AG04449 (cell line): ENCODE measurements at regions of chr3 and their contacts with region 1.

Region 1: GRCh38 chr3:55721716-55722484 is 234.8 kb upstream of the WNT5A start:
- DNase-seq: no peak
- H3K4me3 ChIP-seq: no peak overlapping the region
- CTCF ChIP-seq: peak; percentile 63

Region 2: DNA sequence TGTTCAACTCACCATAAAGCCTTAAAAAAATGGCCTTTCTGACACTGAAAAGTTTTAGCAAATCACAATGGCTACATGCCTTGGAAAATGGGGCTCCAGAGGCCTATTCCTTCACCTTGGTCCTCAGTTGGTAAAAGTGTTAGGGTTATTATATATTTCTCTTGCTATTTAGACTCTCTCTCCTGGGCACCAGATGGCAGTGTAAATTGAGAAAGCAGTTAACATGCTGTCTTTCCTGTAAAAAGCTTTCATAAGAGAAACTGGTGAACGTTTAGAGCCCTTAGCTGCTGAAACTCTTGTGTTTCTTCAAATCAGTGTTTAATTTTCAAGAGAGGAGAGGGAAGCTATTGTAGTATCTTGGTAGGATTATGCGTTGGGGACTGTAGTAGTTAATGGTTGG is 883.9 kb before region 1 on chr3:
- CTCF ChIA-PET with region 1: interaction called, 11 read pairs
- POLR2A ChIA-PET with region 1: no interaction called
- DNase-seq: no peak
- H3K4me3 ChIP-seq: no peak overlapping the region
- CTCF ChIP-seq: peak; percentile 9

Region 3: GRCh38 chr3:55485211-55485791 is 236.6 kb before region 1 on chr3:
- CTCF ChIA-PET with region 1: interaction called, 25 read pairs
- POLR2A ChIA-PET with region 1: interaction called, 5 read pairs
- DNase-seq: no peak
- H3K4me3 ChIP-seq: peak overlapping the region; percentile 98
- CTCF ChIP-seq: peak; percentile 80

Region 4: DNA sequence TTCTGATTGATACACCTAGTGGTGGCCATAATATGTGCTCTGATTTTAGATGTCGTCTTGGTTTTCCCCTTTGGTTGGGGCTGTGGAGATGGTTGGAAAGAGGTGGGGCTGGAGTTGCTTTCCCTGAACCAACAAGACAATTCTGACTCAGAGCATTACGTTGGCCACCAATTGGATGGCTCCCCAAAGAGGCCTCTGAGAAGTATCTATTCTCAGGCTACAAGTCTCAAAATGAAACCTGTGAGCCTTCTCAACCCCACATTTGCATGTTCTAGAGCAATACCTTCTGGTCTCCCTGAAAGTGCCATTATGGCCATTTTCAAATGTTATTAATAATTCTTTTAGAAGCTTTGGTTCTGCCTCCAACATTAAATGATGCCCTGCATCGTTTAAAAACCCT is 46.4 kb before region 1 on chr3:
- CTCF ChIA-PET with region 1: no interaction called
- POLR2A ChIA-PET with region 1: no interaction called
- DNase-seq: no peak
- H3K4me3 ChIP-seq: no peak overlapping the region
- CTCF ChIP-seq: no peak

Region 5: DNA sequence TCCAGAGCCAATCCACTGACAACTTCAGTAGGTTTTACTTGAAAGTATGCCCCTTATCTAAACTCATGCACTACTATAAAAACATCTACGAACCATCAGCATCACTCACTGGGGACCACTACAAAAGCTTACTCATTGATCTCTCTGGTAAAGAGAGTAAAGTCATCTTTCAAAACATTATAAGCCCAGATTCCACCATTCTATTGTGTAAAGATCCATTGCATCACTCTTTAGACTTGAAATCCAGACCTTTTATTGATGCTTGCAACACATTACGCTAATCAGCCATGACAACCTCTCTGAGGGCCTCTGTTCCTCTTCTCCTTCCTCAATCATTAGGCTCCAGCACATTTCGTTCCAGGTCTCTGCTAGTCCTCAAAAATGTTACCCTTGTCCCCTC is 14.1 kb after region 1 on chr3:
- CTCF ChIA-PET with region 1: interaction called, 10 read pairs
- POLR2A ChIA-PET with region 1: no interaction called
- DNase-seq: no peak
- H3K4me3 ChIP-seq: no peak overlapping the region
- CTCF ChIP-seq: no peak

Region 6: GRCh38 chr3:55746808-55747413 is 25.0 kb after region 1 on chr3:
- CTCF ChIA-PET with region 1: interaction called, 11 read pairs
- POLR2A ChIA-PET with region 1: no interaction called
- DNase-seq: no peak
- H3K4me3 ChIP-seq: no peak overlapping the region
- CTCF ChIP-seq: peak; percentile 12